WTC11 (cell line): ENCODE measurements at regions of chr5 and their contacts with region 1.

Region 1: DNA sequence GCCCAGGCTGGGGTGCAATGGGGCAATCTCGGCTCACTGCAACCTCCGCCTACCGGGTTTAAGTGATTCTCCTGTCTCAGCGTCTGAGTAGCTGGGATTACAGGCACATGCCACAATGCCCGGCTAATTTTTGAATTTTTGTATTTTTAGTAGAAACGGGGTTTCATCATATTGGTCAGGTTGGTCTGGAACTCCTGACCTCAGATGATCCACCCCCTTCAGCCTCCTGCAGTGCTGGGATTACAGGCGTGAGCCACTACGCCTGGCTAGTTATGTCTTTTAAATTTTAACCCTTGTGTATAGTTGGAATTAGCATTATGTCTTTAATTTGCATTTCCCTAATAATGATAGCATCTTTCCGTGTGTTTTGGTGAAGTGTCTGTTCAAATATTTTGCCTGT is 11.4 kb downstream of the GPBP1 start:
- DNase-seq: no peak
- ATAC-seq: no peak
- H3K4me3 Mint-ChIP-seq: peak overlapping the region; percentile 18
- H3K27ac Mint-ChIP-seq: peak overlapping the region; percentile 34
- H3K4me1 Mint-ChIP-seq: peaks cover 67% of the 10 kb centered on the region
- H3K27me3 Mint-ChIP-seq: no peaks in the 10 kb centered on the region
- CTCF ChIP-seq: no peak

Region 2: GRCh38 chr5:57199866-57200265 is 14.6 kb after region 1 on chr5:
- CTCF ChIA-PET with region 1: no interaction called
- POLR2A ChIA-PET with region 1: no interaction called
- DNase-seq: no peak
- ATAC-seq: peak; percentile 71
- H3K4me3 Mint-ChIP-seq: peak overlapping the region; percentile 25
- H3K27ac Mint-ChIP-seq: peak overlapping the region; percentile 60
- H3K4me1 Mint-ChIP-seq: peaks cover 55% of the 10 kb centered on the region
- H3K27me3 Mint-ChIP-seq: no peaks in the 10 kb centered on the region
- CTCF ChIP-seq: no peak

Region 3: DNA sequence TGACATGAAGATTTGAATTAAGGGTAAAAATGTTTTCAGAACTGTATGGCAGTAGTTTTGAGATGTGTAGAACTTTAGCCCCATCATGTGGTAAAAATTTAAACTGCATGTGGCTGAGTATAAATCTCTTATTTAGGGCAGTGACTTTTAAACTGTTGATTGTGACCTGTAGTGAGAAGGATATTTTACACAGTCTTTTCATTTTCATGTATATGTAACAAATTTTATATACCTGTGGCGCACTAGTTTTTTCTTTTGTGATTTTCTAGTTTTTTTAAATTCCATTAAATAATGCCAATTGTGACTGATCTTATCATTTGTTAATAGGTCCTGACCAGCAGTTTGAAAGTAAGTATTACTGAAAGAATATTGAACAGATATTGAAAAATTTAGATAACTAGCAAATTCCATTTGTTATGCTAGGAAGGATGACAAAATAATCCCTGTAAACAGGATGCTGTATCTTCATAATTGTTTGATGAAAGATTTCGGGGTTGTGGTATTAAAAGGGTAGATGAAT is 35.8 kb after region 1 on chr5:
- CTCF ChIA-PET with region 1: no interaction called
- POLR2A ChIA-PET with region 1: interaction called, 10 read pairs
- DNase-seq: no peak
- ATAC-seq: peak; percentile 65; the same call in 1 of the 2 replicates
- H3K4me3 Mint-ChIP-seq: no peak overlapping the region
- H3K27ac Mint-ChIP-seq: peak overlapping the region; percentile 49
- H3K4me1 Mint-ChIP-seq: peaks cover 8% of the 10 kb centered on the region
- H3K27me3 Mint-ChIP-seq: no peaks in the 10 kb centered on the region
- CTCF ChIP-seq: peak; percentile 57

Region 4: GRCh38 chr5:57231607-57232006 is 46.3 kb after region 1 on chr5:
- CTCF ChIA-PET with region 1: no interaction called
- POLR2A ChIA-PET with region 1: no interaction called
- DNase-seq: no peak
- ATAC-seq: no peak
- H3K4me3 Mint-ChIP-seq: no peak overlapping the region
- H3K27ac Mint-ChIP-seq: 0 out of 2 replicates have a peak overlapping the region, but pooled peaks have one; percentile 77
- H3K4me1 Mint-ChIP-seq: peaks cover 14% of the 10 kb centered on the region
- H3K27me3 Mint-ChIP-seq: no peaks in the 10 kb centered on the region
- CTCF ChIP-seq: no peak

Region 5: DNA sequence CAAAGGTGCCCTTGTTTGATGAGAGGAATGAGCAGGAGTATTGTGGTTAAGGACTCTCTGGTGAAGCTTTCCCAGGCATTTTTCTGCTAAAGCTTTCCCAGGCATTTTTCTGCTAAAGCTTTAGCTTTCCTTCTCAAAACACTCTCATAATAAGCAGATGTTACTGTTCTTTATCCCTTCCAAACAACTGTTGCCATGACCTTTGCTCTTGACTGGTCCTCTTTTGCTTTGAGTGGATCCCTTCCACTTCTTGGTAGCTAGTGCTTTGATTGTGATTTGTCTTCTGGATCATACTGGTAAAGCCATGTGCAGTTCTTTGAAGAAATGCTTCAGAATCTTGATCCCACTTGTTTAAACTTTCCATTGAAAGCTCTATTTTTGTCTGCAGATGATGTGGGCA is 74.4 kb after region 1 on chr5:
- CTCF ChIA-PET with region 1: no interaction called
- POLR2A ChIA-PET with region 1: no interaction called
- DNase-seq: no peak
- ATAC-seq: no peak
- H3K4me3 Mint-ChIP-seq: no peak overlapping the region
- H3K27ac Mint-ChIP-seq: no peak overlapping the region
- H3K4me1 Mint-ChIP-seq: no peaks in the 10 kb centered on the region
- H3K27me3 Mint-ChIP-seq: no peaks in the 10 kb centered on the region
- CTCF ChIP-seq: no peak

Region 6: GRCh38 chr5:57724836-57725235 is 539.5 kb after region 1 on chr5:
- CTCF ChIA-PET with region 1: no interaction called
- POLR2A ChIA-PET with region 1: no interaction called
- DNase-seq: no peak
- ATAC-seq: no peak
- H3K4me3 Mint-ChIP-seq: no peak overlapping the region
- H3K27ac Mint-ChIP-seq: no peak overlapping the region
- H3K4me1 Mint-ChIP-seq: no peaks in the 10 kb centered on the region
- H3K27me3 Mint-ChIP-seq: no peaks in the 10 kb centered on the region; the same call in 1 of the 2 replicates
- CTCF ChIP-seq: no peak